ENCODE measurements at regions of chr7 and their contacts with region 1.

Region 1: GRCh38 chr7:47327698-47328391 is 254.1 kb downstream of the TNS3 start:
- DNase-seq: peak; percentile 92

Region 2: DNA sequence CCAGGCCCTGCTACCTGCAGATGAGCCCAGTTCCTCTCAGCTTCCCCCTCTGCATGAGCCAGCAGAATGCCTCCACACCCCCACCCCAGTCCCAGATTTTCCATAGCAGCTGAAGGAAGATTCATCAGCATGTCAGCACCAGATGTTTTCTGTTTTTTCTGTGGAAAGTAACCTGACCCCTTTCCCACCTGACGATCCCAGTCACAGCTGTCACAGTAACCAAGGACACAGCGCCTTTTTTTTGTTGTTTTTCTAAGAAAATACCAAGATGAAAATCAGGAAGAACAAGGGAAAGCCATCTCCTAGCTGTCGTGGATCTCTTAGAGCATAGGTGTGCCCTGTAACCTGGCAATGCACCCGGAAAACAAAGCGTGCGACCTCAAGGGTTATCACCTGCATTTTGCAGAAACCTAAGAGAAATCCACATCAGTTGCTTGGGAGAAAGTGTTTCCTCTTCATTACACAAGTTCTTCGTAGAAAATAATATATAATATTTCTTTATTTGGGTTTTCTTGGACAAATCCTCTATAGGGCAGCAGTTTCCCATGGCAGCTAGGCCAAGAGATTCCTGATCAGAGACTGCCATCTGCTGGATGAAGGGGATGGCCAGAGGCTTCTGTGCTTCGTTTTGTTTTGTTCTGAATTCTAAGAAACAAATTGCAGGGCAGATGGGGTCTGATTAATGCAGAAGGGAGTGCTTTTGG is 147.9 kb before region 1 on chr7:
- intact Hi-C with region 1: no loop called
- DNase-seq: no peak

Region 3: GRCh38 chr7:47291461-47292081 is 36.3 kb before region 1 on chr7:
- intact Hi-C with region 1: loop called (anchors 2 kb)
- DNase-seq: no peak

Region 4: GRCh38 chr7:47314728-47315607 is 12.9 kb before region 1 on chr7:
- intact Hi-C with region 1: loop called (anchors 2 kb)
- DNase-seq: no peak

Measured in cardiac septum (tissue), 1 donor.